IMR-90 (cell line): ENCODE measurements at regions of chr3 and their contacts with region 1.

Region 1: GRCh38 chr3:188348435-188349244 is 194.7 kb downstream of the LPP start:
- DNase-seq: peak; percentile 85
- ATAC-seq: peak; percentile 74
- H3K4me3 ChIP-seq: no peak overlapping the region
- H3K27ac ChIP-seq: peak overlapping the region; percentile 45; the same call in 1 of the 2 replicates
- H3K4me1 ChIP-seq: peaks cover 18% of the 10 kb centered on the region
- H3K27me3 ChIP-seq: no peaks in the 10 kb centered on the region
- CTCF ChIP-seq: no peak
- POLR2A ChIP-seq: no peak
- RAD21 ChIP-seq: no peak

Region 2: GRCh38 chr3:188303286-188303813 is 45.3 kb before region 1 on chr3:
- CTCF ChIA-PET with region 1: no interaction called
- POLR2A ChIA-PET with region 1: no interaction called
- dilution Hi-C with region 1: no loop called
- in situ Hi-C with region 1: no loop called
- intact Hi-C with region 1: loop called (anchors 5 kb)
- DNase-seq: no peak
- ATAC-seq: no peak
- H3K4me3 ChIP-seq: no peak overlapping the region
- H3K27ac ChIP-seq: no peak overlapping the region
- H3K4me1 ChIP-seq: peaks cover 4% of the 10 kb centered on the region
- H3K27me3 ChIP-seq: no peaks in the 10 kb centered on the region
- CTCF ChIP-seq: no peak
- POLR2A ChIP-seq: no peak
- RAD21 ChIP-seq: no peak

Region 3: GRCh38 chr3:189056646-189057335 is 708.2 kb after region 1 on chr3:
- CTCF ChIA-PET with region 1: no interaction called
- POLR2A ChIA-PET with region 1: no interaction called
- dilution Hi-C with region 1: no loop called
- in situ Hi-C with region 1: no loop called
- intact Hi-C with region 1: no loop called
- DNase-seq: no peak
- ATAC-seq: no peak
- H3K4me3 ChIP-seq: no peak overlapping the region
- H3K27ac ChIP-seq: no peak overlapping the region
- H3K4me1 ChIP-seq: no peaks in the 10 kb centered on the region
- H3K27me3 ChIP-seq: peaks cover 2% of the 10 kb centered on the region
- CTCF ChIP-seq: no peak
- POLR2A ChIP-seq: no peak
- RAD21 ChIP-seq: no peak